MCF 10A (cell line): ENCODE measurements at regions of chr19 and their contacts with region 1.

Region 1: GRCh38 chr19:10095948-10096621 is 6.4 kb downstream of the ANGPTL6 start:
- DNase-seq: peak; percentile 87
- H3K4me3 Mint-ChIP-seq: peak overlapping the region; percentile 66
- H3K27ac Mint-ChIP-seq: no peak overlapping the region
- H3K4me1 Mint-ChIP-seq: no peaks in the 10 kb centered on the region
- H3K27me3 Mint-ChIP-seq: no peaks in the 10 kb centered on the region
- CTCF ChIP-seq: no peak

Region 2: DNA sequence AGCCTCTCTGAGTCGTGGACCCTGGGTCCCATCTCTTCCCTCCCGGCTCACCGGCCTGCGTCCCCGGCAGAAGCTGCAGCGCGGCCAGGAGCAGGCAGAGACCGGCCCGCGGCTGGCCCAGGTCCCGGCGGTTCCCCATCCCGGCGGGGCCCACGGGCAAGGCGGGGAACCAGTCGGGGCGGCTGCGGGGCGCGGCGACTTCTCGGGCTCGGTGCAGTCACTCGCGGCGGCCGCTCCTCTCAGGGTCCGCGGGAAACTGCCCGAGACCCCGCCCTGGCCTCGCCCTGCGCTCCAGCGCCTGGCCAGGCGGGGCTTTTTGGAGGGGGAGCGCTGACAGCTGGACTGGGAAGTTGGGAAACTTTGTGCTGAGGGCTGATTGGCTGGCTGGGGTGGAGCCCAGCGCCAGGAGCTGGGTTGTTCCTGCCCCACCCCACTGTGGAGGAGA is 85.8 kb before region 1 on chr19 and contains the start of gene COL5A3:
- CTCF ChIA-PET with region 1: no interaction called
- POLR2A ChIA-PET with region 1: no interaction called
- intact Hi-C with region 1: no loop called
- DNase-seq: peak; percentile 49
- H3K4me3 Mint-ChIP-seq: peak within 1 kb of the TSS; percentile 54
- H3K27ac Mint-ChIP-seq: no peak within 1 kb of the TSS
- H3K4me1 Mint-ChIP-seq: peaks cover 20% of the 10 kb centered on the region
- H3K27me3 Mint-ChIP-seq: peaks cover 78% of the 10 kb centered on the region
- CTCF ChIP-seq: no peak
- total RNA-seq, gene COL5A3: 0.98 and 1.5 TPM in 2 replicates

Region 3: GRCh38 chr19:10106100-10106936 is 10.2 kb after region 1 on chr19 and contains the start of gene PPAN:
- CTCF ChIA-PET with region 1: interaction called, 5 read pairs
- POLR2A ChIA-PET with region 1: interaction called, 23 read pairs
- intact Hi-C with region 1: no loop called
- DNase-seq: peak; percentile 99
- H3K4me3 Mint-ChIP-seq: peak within 1 kb of the TSS; percentile 88
- H3K27ac Mint-ChIP-seq: peak within 1 kb of the TSS; percentile 91
- H3K4me1 Mint-ChIP-seq: peaks cover 9% of the 10 kb centered on the region
- H3K27me3 Mint-ChIP-seq: no peaks in the 10 kb centered on the region
- CTCF ChIP-seq: no peak
- total RNA-seq, gene PPAN: 95.0 and 123 TPM in 2 replicates

Region 4: GRCh38 chr19:10112895-10113591 is 17.0 kb after region 1 on chr19:
- CTCF ChIA-PET with region 1: interaction called, 4 read pairs
- POLR2A ChIA-PET with region 1: interaction called, 12 read pairs
- intact Hi-C with region 1: no loop called
- DNase-seq: peak; percentile 68
- H3K4me3 Mint-ChIP-seq: no peak overlapping the region
- H3K27ac Mint-ChIP-seq: no peak overlapping the region
- H3K4me1 Mint-ChIP-seq: peaks cover 10% of the 10 kb centered on the region
- H3K27me3 Mint-ChIP-seq: no peaks in the 10 kb centered on the region
- CTCF ChIP-seq: peak; percentile 68